Left lung (tissue), 14 donors: ENCODE measurements at regions of chr7 and their contacts with region 1.

Region 1: DNA sequence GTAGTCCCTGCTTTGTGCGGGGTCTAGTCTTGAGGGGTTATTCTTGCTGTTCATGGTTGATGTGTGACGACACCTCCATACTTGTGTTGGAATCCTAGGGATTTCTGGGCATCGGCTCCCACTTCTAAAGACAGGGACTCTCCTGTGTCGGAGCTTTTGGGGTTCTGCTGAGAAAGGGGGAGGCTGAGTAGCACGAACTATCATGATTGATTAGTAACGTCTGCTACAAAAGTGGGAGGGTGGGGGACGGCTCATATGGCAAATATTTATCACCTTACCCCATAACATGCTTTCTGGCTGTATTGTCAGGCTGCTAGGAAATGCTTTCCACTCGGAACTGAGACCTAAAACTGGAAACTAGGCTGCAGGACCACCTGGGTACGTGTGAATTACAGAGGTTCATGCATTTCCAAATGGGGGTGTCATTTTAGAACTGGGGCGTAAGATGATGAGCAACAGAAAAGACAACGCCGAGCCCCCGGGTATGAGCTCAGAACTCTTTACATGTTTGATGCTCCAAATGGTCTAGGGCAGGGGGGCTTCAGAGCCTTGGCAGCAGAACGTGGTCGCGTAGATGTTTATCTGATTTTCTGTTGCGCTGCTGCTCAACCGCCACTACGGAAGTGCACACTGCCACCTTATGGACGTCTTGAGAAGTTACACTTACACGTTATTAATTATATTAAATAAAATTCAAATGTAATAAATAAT is 15.1 kb upstream of the NME8 start:
- DNase-seq: peak; percentile 41 to 70 (median 54)
- ATAC-seq: peak; percentile 85
- H3K4me3 ChIP-seq: peak overlapping the region; percentile 10 to 20
- H3K27ac ChIP-seq: no peak overlapping the region
- H3K4me1 ChIP-seq: peaks cover 0 to 12% of the 10 kb centered on the region in 2 donors
- H3K27me3 ChIP-seq: no peaks in the 10 kb centered on the region
- CTCF ChIP-seq: peak; percentile 58 to 73

Region 2: GRCh38 chr7:37549076-37549941 is 284.0 kb before region 1 on chr7:
- intact Hi-C with region 1: no loop called
- DNase-seq: no peak
- ATAC-seq: no peak
- H3K4me3 ChIP-seq: no peak overlapping the region
- H3K27ac ChIP-seq: no peak overlapping the region
- H3K4me1 ChIP-seq: no peaks in the 10 kb centered on the region
- H3K27me3 ChIP-seq: no peaks in the 10 kb centered on the region
- CTCF ChIP-seq: no peak

Region 3: GRCh38 chr7:37633048-37633447 is 200.2 kb before region 1 on chr7:
- intact Hi-C with region 1: loop called in 1 of 2 experiments (anchors 10 kb)
- DNase-seq: no peak
- ATAC-seq: no peak
- H3K4me3 ChIP-seq: no peak overlapping the region
- H3K27ac ChIP-seq: no peak overlapping the region
- H3K4me1 ChIP-seq: no peaks in the 10 kb centered on the region
- H3K27me3 ChIP-seq: no peaks in the 10 kb centered on the region
- CTCF ChIP-seq: no peak